H1 (cell line): ENCODE measurements at regions of chr5 and their contacts with region 1.

Region 1: GRCh38 chr5:151740336-151740942 is 18.0 kb downstream of the ATOX1 start:
- DNase-seq: peak in 1 of 2 experiments; percentile 77
- H3K4me3 ChIP-seq: peak overlapping the region in 2 of 4 experiments; percentile 5 to 22; a peak in 4 of 8 replicates
- H3K27ac ChIP-seq: peak overlapping the region; percentile 70; the same call in 1 of the 2 replicates
- H3K4me1 ChIP-seq: peaks cover 6 to 10% (median 9%) of the 10 kb centered on the region in 4 experiments
- H3K27me3 ChIP-seq: no peaks in the 10 kb centered on the region
- CTCF ChIP-seq: peak; percentile 75 to 79 (median 76)
- EP300 ChIP-seq: no peak
- POLR2A ChIP-seq: 0 out of 3 replicates have a peak, but pooled peaks of 1 of the 2 experiments have one; percentile 48
- RAD21 ChIP-seq: peak; percentile 79 to 81

Region 2: GRCh38 chr5:151612689-151613427 is 127.6 kb before region 1 on chr5:
- CTCF ChIA-PET with region 1: interaction called, 11 read pairs
- POLR2A ChIA-PET with region 1: no interaction called
- DNase-seq: no peak
- H3K4me3 ChIP-seq: no peak overlapping the region
- H3K27ac ChIP-seq: no peak overlapping the region; the same call in 1 of the 2 replicates
- H3K4me1 ChIP-seq: 0 out of 7 replicates have a peak, but pooled peaks cover 0 to 3% (median 0%) of the 10 kb centered on the region in 4 experiments
- H3K27me3 ChIP-seq: no peaks in the 10 kb centered on the region
- CTCF ChIP-seq: no peak
- EP300 ChIP-seq: no peak
- POLR2A ChIP-seq: no peak
- RAD21 ChIP-seq: no peak

Region 3: GRCh38 chr5:151686674-151687407 is 53.6 kb before region 1 on chr5 and contains the start of gene SPARC:
- CTCF ChIA-PET with region 1: interaction called, 991 read pairs
- POLR2A ChIA-PET with region 1: interaction called, 12 read pairs
- DNase-seq: peak; percentile 56 to 77
- H3K4me3 ChIP-seq: peak within 1 kb of the TSS; percentile 64 to 79 (median 72)
- H3K27ac ChIP-seq: no peak within 1 kb of the TSS
- H3K4me1 ChIP-seq: peaks cover 3 to 23% (median 15%) of the 10 kb centered on the region in 4 experiments
- H3K27me3 ChIP-seq: no peaks in the 10 kb centered on the region
- CTCF ChIP-seq: no peak
- EP300 ChIP-seq: no peak
- POLR2A ChIP-seq: peak; percentile 27 to 94
- RAD21 ChIP-seq: no peak; a peak in 1 of 4 replicates
- total RNA-seq, gene SPARC: 438 and 452 TPM in 2 replicates

Region 4: DNA sequence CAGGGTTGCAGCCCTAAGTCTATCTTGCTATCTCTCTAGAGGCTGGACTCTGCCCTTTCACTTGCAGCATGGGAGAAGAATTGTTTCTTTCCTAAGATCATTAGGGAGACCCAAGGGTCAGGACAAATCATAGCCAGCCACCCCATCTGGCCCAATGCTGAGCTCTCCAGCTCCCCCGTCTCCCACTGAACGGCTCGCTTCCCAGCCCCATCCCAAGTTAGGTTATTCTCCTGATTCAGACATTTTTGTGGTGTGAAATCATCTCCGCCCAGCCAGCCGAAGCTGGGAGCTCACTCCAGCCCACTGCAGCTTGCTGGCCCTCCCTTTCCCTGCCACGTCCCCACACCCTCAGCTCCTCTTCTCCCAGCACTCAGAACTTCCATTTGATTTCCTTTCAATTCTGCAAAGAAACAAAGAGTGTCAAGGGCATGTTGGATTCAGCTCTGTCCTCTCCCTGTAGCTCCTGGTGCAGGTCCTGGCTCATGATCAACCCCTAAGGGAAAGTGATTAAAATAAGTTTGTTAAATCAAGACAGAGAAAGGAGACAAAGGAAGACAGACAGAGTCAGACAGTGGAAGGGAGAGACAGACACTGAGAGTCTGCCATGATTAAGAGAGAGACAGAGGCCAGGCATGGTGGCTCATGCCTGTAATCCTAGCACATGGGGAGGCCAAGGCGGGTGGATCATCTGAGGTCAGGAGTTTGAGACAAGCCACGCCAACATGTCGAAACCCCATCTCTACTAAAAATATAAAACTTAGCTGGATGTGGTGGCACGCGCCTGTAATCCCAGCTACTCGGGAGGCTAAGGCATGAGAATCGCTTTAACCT is 41.2 kb before region 1 on chr5:
- CTCF ChIA-PET with region 1: interaction called, 25 read pairs
- POLR2A ChIA-PET with region 1: interaction called, 14 read pairs
- DNase-seq: no peak
- H3K4me3 ChIP-seq: no peak overlapping the region
- H3K27ac ChIP-seq: no peak overlapping the region
- H3K4me1 ChIP-seq: peaks cover 3 to 14% (median 6%) of the 10 kb centered on the region in 4 experiments
- H3K27me3 ChIP-seq: no peaks in the 10 kb centered on the region
- CTCF ChIP-seq: no peak
- EP300 ChIP-seq: no peak
- POLR2A ChIP-seq: no peak
- RAD21 ChIP-seq: no peak

Region 5: GRCh38 chr5:151719228-151720000 is 21.0 kb before region 1 on chr5:
- CTCF ChIA-PET with region 1: interaction called, 198 read pairs
- POLR2A ChIA-PET with region 1: interaction called, 5 read pairs
- DNase-seq: peak in 1 of 2 experiments; percentile 67
- H3K4me3 ChIP-seq: no peak overlapping the region
- H3K27ac ChIP-seq: no peak overlapping the region
- H3K4me1 ChIP-seq: peaks cover 0 to 10% (median 6%) of the 10 kb centered on the region in 4 experiments; a peak in 4 of 7 replicates
- H3K27me3 ChIP-seq: no peaks in the 10 kb centered on the region
- CTCF ChIP-seq: peak; percentile 54 to 56 (median 55)
- EP300 ChIP-seq: no peak
- POLR2A ChIP-seq: no peak
- RAD21 ChIP-seq: peak; percentile 65 to 73

Region 6: GRCh38 chr5:151758430-151759241 is 18.2 kb after region 1 on chr5 and contains the start of gene ATOX1:
- CTCF ChIA-PET with region 1: interaction called, 53 read pairs
- POLR2A ChIA-PET with region 1: interaction called, 6 read pairs
- DNase-seq: peak in 1 of 2 experiments; percentile 94
- H3K4me3 ChIP-seq: peak within 1 kb of the TSS; percentile 61 to 90 (median 72)
- H3K27ac ChIP-seq: peak within 1 kb of the TSS; percentile 28; the same call in 1 of the 2 replicates
- H3K4me1 ChIP-seq: peaks cover 5 to 14% (median 7%) of the 10 kb centered on the region in 4 experiments
- H3K27me3 ChIP-seq: no peaks in the 10 kb centered on the region
- CTCF ChIP-seq: no peak
- EP300 ChIP-seq: no peak
- POLR2A ChIP-seq: peak; percentile 77 to 93
- RAD21 ChIP-seq: no peak
- total RNA-seq, gene ATOX1: 77.9 and 79.9 TPM in 2 replicates